ENCODE measurements at regions of chr16 and their contacts with region 1.

Region 1: GRCh38 chr16:71499775-71500364 is 10.7 kb upstream of the ZNF19 start:
- DNase-seq: peak; percentile 57
- ATAC-seq: peak; percentile 86
- H3K4me3 ChIP-seq: no peak overlapping the region
- H3K27ac ChIP-seq: no peak overlapping the region
- H3K4me1 ChIP-seq: 0 out of 4 replicates have a peak, but pooled peaks cover 0 to under 1% of the 10 kb centered on the region in 2 experiments
- H3K27me3 ChIP-seq: no peaks in the 10 kb centered on the region
- CTCF ChIP-seq: peak; percentile 63 to 82 (median 75)
- POLR2A ChIP-seq: no peak
- RAD21 ChIP-seq: peak; percentile 91

Region 2: GRCh38 chr16:71172481-71173201 is 327.2 kb before region 1 on chr16:
- CTCF ChIA-PET with region 1: no interaction called
- POLR2A ChIA-PET with region 1: no interaction called
- RAD21 ChIA-PET with region 1: no interaction called
- intact Hi-C with region 1: no loop called
- DNase-seq: no peak
- ATAC-seq: no peak
- H3K4me3 ChIP-seq: no peak overlapping the region
- H3K27ac ChIP-seq: no peak overlapping the region
- H3K4me1 ChIP-seq: no peaks in the 10 kb centered on the region
- H3K27me3 ChIP-seq: peaks cover 31% of the 10 kb centered on the region
- CTCF ChIP-seq: no peak
- POLR2A ChIP-seq: no peak
- RAD21 ChIP-seq: no peak

Region 3: DNA sequence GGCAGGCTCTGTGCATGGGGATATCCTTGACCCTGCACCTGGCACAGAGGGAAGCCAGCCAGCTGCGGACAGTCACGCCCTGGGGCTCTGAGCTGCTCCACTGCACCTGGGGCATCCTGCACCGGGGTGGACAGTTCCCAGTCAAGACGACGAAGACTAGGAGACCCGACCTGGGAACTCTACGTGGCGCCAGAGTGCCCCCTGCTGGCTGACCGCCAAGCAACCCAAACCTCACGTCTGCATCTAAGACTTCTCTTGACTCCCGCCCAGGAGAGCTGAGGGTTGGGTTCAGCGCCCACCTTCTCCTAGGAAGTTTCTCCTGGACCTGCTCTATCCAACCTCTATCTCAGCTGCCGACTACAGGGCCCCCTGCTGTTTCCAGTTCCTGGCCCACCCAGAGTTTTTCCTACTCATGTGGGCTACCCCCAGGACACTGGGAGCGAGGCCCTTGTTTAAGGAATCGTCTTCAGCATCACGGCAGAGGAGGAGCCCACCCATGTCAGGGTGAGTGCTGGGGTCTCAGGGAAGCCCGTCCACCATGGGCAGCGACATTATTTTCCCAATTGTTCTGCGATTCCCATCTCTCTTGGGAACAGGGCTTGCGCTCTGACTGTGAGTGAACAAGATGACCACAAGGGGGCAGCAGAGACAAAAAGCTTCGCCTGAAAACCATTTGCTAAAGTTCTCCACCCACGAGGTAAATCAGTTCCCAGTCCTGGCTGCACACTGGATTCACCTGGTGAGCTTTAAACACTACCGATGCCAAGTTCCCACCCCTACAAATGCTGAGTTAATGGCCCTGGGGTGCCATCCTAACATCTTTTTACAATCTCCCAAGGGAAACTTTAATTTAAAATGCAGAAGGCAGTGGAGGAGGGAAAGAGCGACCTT is 87.4 kb before region 1 on chr16:
- CTCF ChIA-PET with region 1: interaction called, 74 read pairs
- POLR2A ChIA-PET with region 1: no interaction called
- RAD21 ChIA-PET with region 1: interaction called, 5 to 6 read pairs
- intact Hi-C with region 1: loop called (anchors 1 kb)
- DNase-seq: peak; percentile 64
- ATAC-seq: peak; percentile 91
- H3K4me3 ChIP-seq: peak overlapping the region; percentile 32 to 49
- H3K27ac ChIP-seq: no peak overlapping the region
- H3K4me1 ChIP-seq: peaks cover 0 to 10% of the 10 kb centered on the region in 2 experiments; a peak in 3 of 4 replicates
- H3K27me3 ChIP-seq: peaks cover 18% of the 10 kb centered on the region
- CTCF ChIP-seq: peak; percentile 66 to 95 (median 78)
- POLR2A ChIP-seq: no peak
- RAD21 ChIP-seq: peak; percentile 87

Region 4: GRCh38 chr16:71441348-71441781 is 58.5 kb before region 1 on chr16:
- CTCF ChIA-PET with region 1: no interaction called
- POLR2A ChIA-PET with region 1: no interaction called
- RAD21 ChIA-PET with region 1: no interaction called
- intact Hi-C with region 1: no loop called
- DNase-seq: no peak
- ATAC-seq: peak; percentile 55
- H3K4me3 ChIP-seq: no peak overlapping the region
- H3K27ac ChIP-seq: no peak overlapping the region
- H3K4me1 ChIP-seq: no peaks in the 10 kb centered on the region
- H3K27me3 ChIP-seq: no peaks in the 10 kb centered on the region
- CTCF ChIP-seq: peak in 1 of 3 experiments; percentile 39; a peak in 2 of 6 replicates
- POLR2A ChIP-seq: no peak
- RAD21 ChIP-seq: no peak

Region 5: GRCh38 chr16:71537643-71538042 is 37.8 kb after region 1 on chr16:
- CTCF ChIA-PET with region 1: interaction called, 20 read pairs
- POLR2A ChIA-PET with region 1: no interaction called
- RAD21 ChIA-PET with region 1: interaction called in 1 of 2 experiments, 3 read pairs
- intact Hi-C with region 1: no loop called
- DNase-seq: peak; percentile 50
- ATAC-seq: peak; percentile 81
- H3K4me3 ChIP-seq: no peak overlapping the region
- H3K27ac ChIP-seq: no peak overlapping the region
- H3K4me1 ChIP-seq: peaks cover 0 to 6% of the 10 kb centered on the region in 2 experiments; a peak in 1 of 4 replicates
- H3K27me3 ChIP-seq: no peaks in the 10 kb centered on the region
- CTCF ChIP-seq: peak; percentile 68 to 75 (median 70)
- POLR2A ChIP-seq: no peak
- RAD21 ChIP-seq: peak; percentile 87

Region 6: GRCh38 chr16:71594000-71594646 is 94.3 kb after region 1 on chr16:
- CTCF ChIA-PET with region 1: no interaction called
- POLR2A ChIA-PET with region 1: no interaction called
- RAD21 ChIA-PET with region 1: no interaction called
- intact Hi-C with region 1: no loop called
- DNase-seq: no peak
- ATAC-seq: no peak
- H3K4me3 ChIP-seq: no peak overlapping the region
- H3K27ac ChIP-seq: no peak overlapping the region
- H3K4me1 ChIP-seq: no peaks in the 10 kb centered on the region
- H3K27me3 ChIP-seq: peaks cover 4% of the 10 kb centered on the region; the same call in 1 of the 2 replicates
- CTCF ChIP-seq: no peak
- POLR2A ChIP-seq: no peak
- RAD21 ChIP-seq: no peak

Measured in HCT116 (cell line).